SK-N-SH (cell line): ENCODE measurements at regions of chr3 and their contacts with region 1.

Region 1: GRCh38 chr3:14548321-14548729 is 8.2 kb upstream of the GRIP2 start:
- DNase-seq: peak; percentile 89
- H3K4me3 ChIP-seq: no peak overlapping the region
- H3K27ac ChIP-seq: no peak overlapping the region
- H3K4me1 ChIP-seq: peaks cover 0 to 18% of the 10 kb centered on the region in 2 experiments; a peak in 1 of 4 replicates
- H3K27me3 ChIP-seq: no peaks in the 10 kb centered on the region; the same call in 1 of the 2 replicates
- CTCF ChIP-seq: peak; percentile 66
- EP300 ChIP-seq: no peak
- RAD21 ChIP-seq: peak; percentile 85

Region 2: GRCh38 chr3:13687517-13687943 is 860.8 kb before region 1 on chr3:
- CTCF ChIA-PET with region 1: no interaction called
- POLR2A ChIA-PET with region 1: no interaction called
- DNase-seq: no peak
- H3K4me3 ChIP-seq: no peak overlapping the region
- H3K27ac ChIP-seq: no peak overlapping the region
- H3K4me1 ChIP-seq: peaks cover 0 to 18% of the 10 kb centered on the region in 2 experiments; a peak in 1 of 4 replicates
- H3K27me3 ChIP-seq: no peaks in the 10 kb centered on the region
- CTCF ChIP-seq: no peak
- EP300 ChIP-seq: no peak
- RAD21 ChIP-seq: no peak

Region 3: GRCh38 chr3:14517601-14518431 is 30.5 kb before region 1 on chr3:
- CTCF ChIA-PET with region 1: interaction called, 183 read pairs
- POLR2A ChIA-PET with region 1: no interaction called
- DNase-seq: no peak
- H3K4me3 ChIP-seq: no peak overlapping the region
- H3K27ac ChIP-seq: no peak overlapping the region
- H3K4me1 ChIP-seq: no peaks in the 10 kb centered on the region
- H3K27me3 ChIP-seq: no peaks in the 10 kb centered on the region; the same call in 1 of the 2 replicates
- CTCF ChIP-seq: no peak
- EP300 ChIP-seq: no peak
- RAD21 ChIP-seq: no peak

Region 4: GRCh38 chr3:14532691-14533456 is 15.5 kb before region 1 on chr3:
- CTCF ChIA-PET with region 1: interaction called, 91 read pairs
- POLR2A ChIA-PET with region 1: interaction called, 4 read pairs
- DNase-seq: peak; percentile 50
- H3K4me3 ChIP-seq: no peak overlapping the region
- H3K27ac ChIP-seq: peak overlapping the region in 1 of 2 experiments; percentile 16; a peak in 1 of 4 replicates
- H3K4me1 ChIP-seq: peaks cover 0 to 34% of the 10 kb centered on the region in 2 experiments; a peak in 1 of 4 replicates
- H3K27me3 ChIP-seq: 0 out of 2 replicates have a peak, but pooled peaks cover 6% of the 10 kb centered on the region
- CTCF ChIP-seq: no peak
- EP300 ChIP-seq: no peak
- RAD21 ChIP-seq: no peak

Region 5: GRCh38 chr3:14565868-14566588 is 17.7 kb after region 1 on chr3:
- CTCF ChIA-PET with region 1: interaction called, 43 read pairs
- POLR2A ChIA-PET with region 1: no interaction called
- DNase-seq: peak; percentile 64
- H3K4me3 ChIP-seq: no peak overlapping the region
- H3K27ac ChIP-seq: peak overlapping the region in 1 of 2 experiments; percentile 48; a peak in 2 of 4 replicates
- H3K4me1 ChIP-seq: peaks cover 0 to 36% of the 10 kb centered on the region in 2 experiments; a peak in 2 of 4 replicates
- H3K27me3 ChIP-seq: peaks cover 7% of the 10 kb centered on the region; the same call in 1 of the 2 replicates
- CTCF ChIP-seq: no peak
- EP300 ChIP-seq: no peak
- RAD21 ChIP-seq: no peak

Region 6: GRCh38 chr3:14823901-14824629 is 275.7 kb after region 1 on chr3:
- CTCF ChIA-PET with region 1: no interaction called
- POLR2A ChIA-PET with region 1: no interaction called
- DNase-seq: no peak
- H3K4me3 ChIP-seq: no peak overlapping the region
- H3K27ac ChIP-seq: no peak overlapping the region
- H3K4me1 ChIP-seq: no peaks in the 10 kb centered on the region; a peak in 1 of 4 replicates
- H3K27me3 ChIP-seq: peaks cover 27% of the 10 kb centered on the region
- CTCF ChIP-seq: no peak
- EP300 ChIP-seq: no peak
- RAD21 ChIP-seq: no peak